Heart right ventricle (tissue), 16 donors: ENCODE measurements at regions of chr4 and their contacts with region 1.

Region 1: DNA sequence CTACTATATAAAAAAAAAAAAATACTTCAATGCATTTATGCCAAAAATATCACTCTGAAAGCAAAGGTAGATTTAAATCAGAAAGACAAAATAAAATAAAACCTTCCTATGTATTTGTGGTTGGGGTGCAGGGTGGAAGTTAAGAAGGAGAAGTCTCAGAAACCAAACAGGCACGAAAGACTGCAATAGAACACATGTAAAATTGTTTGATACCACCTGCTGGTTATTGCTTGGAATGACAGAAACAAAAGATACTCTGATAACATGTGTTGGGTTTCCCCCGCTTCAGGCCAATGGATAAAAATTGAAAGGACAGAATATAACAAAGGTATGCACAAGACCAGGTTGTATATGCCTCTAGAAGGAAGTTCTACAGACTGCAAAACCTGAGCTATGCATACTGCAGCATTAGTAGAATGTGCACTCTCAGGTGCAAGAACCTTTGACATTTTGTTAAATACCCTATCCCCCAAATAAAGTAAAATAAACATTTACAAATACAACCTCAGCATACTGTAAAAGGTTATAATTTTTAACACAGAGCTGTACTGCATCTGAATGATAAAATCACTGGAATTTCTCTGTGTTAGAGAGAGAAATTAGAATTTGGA is 118.8 kb downstream of the GABRA2 start:
- DNase-seq: no peak
- ATAC-seq: no peak
- H3K4me3 ChIP-seq: no peak overlapping the region
- H3K27ac ChIP-seq: no peak overlapping the region
- H3K4me1 ChIP-seq: no peaks in the 10 kb centered on the region
- H3K27me3 ChIP-seq: no peaks in the 10 kb centered on the region
- CTCF ChIP-seq: peak in 8 of 9 donors; percentile 5 to 56 (median 44)

Region 2: DNA sequence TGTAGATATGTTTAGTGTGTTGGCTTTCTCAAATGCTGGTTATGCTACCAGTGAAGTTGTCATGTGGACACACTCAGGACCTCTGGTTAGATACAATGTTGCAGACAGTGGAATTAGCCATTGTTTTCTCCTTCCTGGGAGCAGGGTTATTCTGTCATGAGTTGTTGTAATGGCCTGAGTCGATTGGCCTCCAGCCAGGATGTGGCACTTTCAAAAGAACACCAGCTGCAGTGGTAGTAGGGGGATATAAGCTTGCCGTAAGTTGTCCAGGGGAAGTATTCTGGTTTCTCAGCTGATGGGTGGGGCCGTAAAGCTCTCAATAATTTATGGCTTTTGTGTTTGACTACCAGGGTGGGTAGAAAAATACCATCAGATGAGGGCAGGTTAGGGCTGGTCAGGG is 847.2 kb before region 1 on chr4:
- intact Hi-C with region 1: no loop called
- DNase-seq: no peak
- ATAC-seq: no peak
- H3K4me3 ChIP-seq: no peak overlapping the region
- H3K27ac ChIP-seq: no peak overlapping the region
- H3K4me1 ChIP-seq: no peaks in the 10 kb centered on the region
- H3K27me3 ChIP-seq: no peaks in the 10 kb centered on the region
- CTCF ChIP-seq: no peak

Region 3: GRCh38 chr4:45453258-45453853 is 817.7 kb before region 1 on chr4:
- intact Hi-C with region 1: loop called in 5 of 10 experiments (anchors 10 kb)
- DNase-seq: no peak
- ATAC-seq: peak in 4 of 8 donors; percentile 50 to 80 (median 60)
- H3K4me3 ChIP-seq: no peak overlapping the region
- H3K27ac ChIP-seq: no peak overlapping the region
- H3K4me1 ChIP-seq: no peaks in the 10 kb centered on the region
- H3K27me3 ChIP-seq: no peaks in the 10 kb centered on the region
- CTCF ChIP-seq: peak in 8 of 9 donors; percentile 9 to 59 (median 48)

Region 4: GRCh38 chr4:45550766-45551366 is 720.2 kb before region 1 on chr4:
- intact Hi-C with region 1: loop called in 4 of 10 experiments (anchors 5 to 10 kb)
- DNase-seq: no peak
- ATAC-seq: no peak
- H3K4me3 ChIP-seq: no peak overlapping the region
- H3K27ac ChIP-seq: no peak overlapping the region
- H3K4me1 ChIP-seq: peaks cover 0 to 7% (median 0%) of the 10 kb centered on the region in 9 donors
- H3K27me3 ChIP-seq: no peaks in the 10 kb centered on the region
- CTCF ChIP-seq: peak in 4 of 9 donors; percentile 3 to 42 (median 18)

Region 5: DNA sequence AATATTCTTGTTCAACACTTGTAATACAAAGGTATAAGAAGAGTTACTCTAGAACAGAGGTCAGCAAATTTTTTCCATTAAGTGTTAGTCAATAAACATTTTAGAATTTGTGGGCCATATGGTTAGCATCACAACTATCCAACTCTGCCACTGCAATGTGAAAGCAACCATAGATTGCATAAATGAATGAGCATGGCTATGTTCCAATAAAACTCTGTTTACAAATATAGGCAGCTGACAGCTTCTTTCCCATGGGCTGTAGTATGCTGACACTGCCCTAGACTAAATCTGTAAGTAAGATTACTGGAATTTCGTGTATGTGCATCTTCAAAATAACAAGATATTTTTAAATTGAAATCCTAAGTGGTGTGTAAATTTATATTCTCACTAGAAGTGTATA is 45.1 kb after region 1 on chr4:
- intact Hi-C with region 1: no loop called
- DNase-seq: no peak
- ATAC-seq: no peak
- H3K4me3 ChIP-seq: no peak overlapping the region
- H3K27ac ChIP-seq: no peak overlapping the region
- H3K4me1 ChIP-seq: no peaks in the 10 kb centered on the region
- H3K27me3 ChIP-seq: no peaks in the 10 kb centered on the region
- CTCF ChIP-seq: no peak